ENCODE measurements at regions of chr22 and their contacts with region 1.

Region 1: GRCh38 chr22:46791201-46791731 is 28.8 kb downstream of the TBC1D22A start:
- DNase-seq: no peak
- H3K4me3 ChIP-seq: no peak overlapping the region
- H3K27ac ChIP-seq: no peak overlapping the region
- H3K4me1 ChIP-seq: no peaks in the 10 kb centered on the region
- H3K27me3 ChIP-seq: no peaks in the 10 kb centered on the region
- CTCF ChIP-seq: no peak

Region 2: GRCh38 chr22:46774253-46774979 is 16.9 kb before region 1 on chr22:
- CTCF ChIA-PET with region 1: no interaction called
- dilution Hi-C with region 1: no loop called
- in situ Hi-C with region 1: no loop called
- intact Hi-C with region 1: loop called (anchors 2 kb)
- DNase-seq: no peak
- H3K4me3 ChIP-seq: peak overlapping the region; percentile 33 to 37 (median 35)
- H3K27ac ChIP-seq: peak overlapping the region; percentile 57
- H3K4me1 ChIP-seq: peaks cover 24% of the 10 kb centered on the region
- H3K27me3 ChIP-seq: no peaks in the 10 kb centered on the region
- CTCF ChIP-seq: peak in 1 of 2 donors; percentile 13

Region 3: DNA sequence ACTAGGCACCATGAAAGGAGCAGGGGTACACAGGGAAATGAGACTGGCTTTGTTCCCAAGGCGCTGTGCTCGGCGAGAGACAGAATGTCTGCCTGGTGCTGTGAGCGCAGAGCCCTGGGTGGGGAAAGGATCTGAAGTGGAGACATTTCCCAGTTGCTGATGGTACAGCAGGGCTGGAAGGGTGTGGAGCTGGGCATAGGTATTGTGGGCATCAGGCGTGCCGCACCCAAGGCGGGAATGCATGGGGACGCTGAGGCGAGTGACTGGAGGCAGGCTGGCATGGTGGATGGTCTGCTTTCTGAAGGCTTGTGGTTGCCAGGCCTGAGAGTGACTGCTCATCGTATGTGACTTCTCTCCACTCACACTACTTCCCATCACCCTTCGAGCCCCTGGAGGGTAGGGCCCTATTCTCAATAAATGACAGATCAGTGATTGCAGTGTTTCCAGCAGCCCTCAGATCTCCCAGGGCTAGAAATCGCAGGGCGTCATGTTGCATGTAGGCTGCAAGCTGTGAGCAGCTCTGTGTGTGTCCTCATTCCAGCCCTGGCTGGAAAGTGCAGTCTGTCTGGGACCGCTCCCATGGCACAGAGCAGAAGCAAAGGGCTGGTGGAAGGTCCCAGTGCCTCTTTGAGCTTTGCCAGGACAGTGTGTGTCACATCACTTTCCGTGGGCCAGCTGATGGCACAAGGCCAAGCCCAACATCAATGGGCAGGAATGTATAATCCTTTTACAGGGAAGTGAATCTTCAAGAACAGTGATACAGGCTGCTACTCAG is 38.9 kb after region 1 on chr22:
- CTCF ChIA-PET with region 1: no interaction called
- dilution Hi-C with region 1: loop called (anchors 5 kb)
- in situ Hi-C with region 1: no loop called
- intact Hi-C with region 1: no loop called
- DNase-seq: peak; percentile 14
- H3K4me3 ChIP-seq: no peak overlapping the region
- H3K27ac ChIP-seq: no peak overlapping the region
- H3K4me1 ChIP-seq: peaks cover 17% of the 10 kb centered on the region
- H3K27me3 ChIP-seq: no peaks in the 10 kb centered on the region
- CTCF ChIP-seq: no peak

Region 4: GRCh38 chr22:46894081-46894671 is 102.9 kb after region 1 on chr22:
- CTCF ChIA-PET with region 1: no interaction called
- dilution Hi-C with region 1: no loop called
- in situ Hi-C with region 1: no loop called
- intact Hi-C with region 1: no loop called
- DNase-seq: no peak
- H3K4me3 ChIP-seq: no peak overlapping the region
- H3K27ac ChIP-seq: no peak overlapping the region
- H3K4me1 ChIP-seq: no peaks in the 10 kb centered on the region
- H3K27me3 ChIP-seq: no peaks in the 10 kb centered on the region
- CTCF ChIP-seq: no peak

Region 5: GRCh38 chr22:47315862-47316419 is 524.7 kb after region 1 on chr22:
- CTCF ChIA-PET with region 1: no interaction called
- dilution Hi-C with region 1: no loop called
- in situ Hi-C with region 1: no loop called
- intact Hi-C with region 1: no loop called
- DNase-seq: no peak
- H3K4me3 ChIP-seq: no peak overlapping the region
- H3K27ac ChIP-seq: no peak overlapping the region
- H3K4me1 ChIP-seq: no peaks in the 10 kb centered on the region
- H3K27me3 ChIP-seq: no peaks in the 10 kb centered on the region
- CTCF ChIP-seq: no peak